MCF 10A (cell line): ENCODE measurements at regions of chr13 and their contacts with region 1.

Region 1: GRCh38 chr13:102870677-102871415 is 25.0 kb downstream of the ERCC5 start:
- DNase-seq: peak; percentile 54
- H3K4me3 Mint-ChIP-seq: no peak overlapping the region
- H3K27ac Mint-ChIP-seq: no peak overlapping the region
- H3K4me1 Mint-ChIP-seq: peaks cover 5% of the 10 kb centered on the region
- H3K27me3 Mint-ChIP-seq: no peaks in the 10 kb centered on the region
- CTCF ChIP-seq: peak; percentile 75

Region 2: DNA sequence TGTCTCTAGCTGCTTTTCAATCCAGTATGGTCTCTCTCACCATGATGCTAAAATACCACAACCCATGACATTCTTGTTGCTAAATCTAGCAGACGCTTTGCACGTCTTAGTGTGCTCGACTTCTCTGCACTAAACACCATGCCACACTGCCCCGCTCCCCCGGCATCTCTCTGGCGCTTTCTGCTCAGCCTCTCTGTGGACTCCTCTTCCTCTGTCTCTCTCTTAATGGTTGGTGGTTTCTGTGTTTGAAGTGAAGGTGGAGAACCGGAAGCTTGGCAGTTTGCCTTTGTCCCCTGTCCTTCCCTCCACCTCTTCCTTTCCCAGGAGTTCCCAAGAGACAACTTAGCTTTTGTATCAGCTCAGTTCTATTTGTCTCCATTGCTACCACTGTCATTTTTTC is 16.2 kb before region 1 on chr13:
- CTCF ChIA-PET with region 1: interaction called, 41 read pairs
- POLR2A ChIA-PET with region 1: no interaction called
- intact Hi-C with region 1: no loop called
- DNase-seq: no peak
- H3K4me3 Mint-ChIP-seq: no peak overlapping the region
- H3K27ac Mint-ChIP-seq: no peak overlapping the region
- H3K4me1 Mint-ChIP-seq: peaks cover 20% of the 10 kb centered on the region
- H3K27me3 Mint-ChIP-seq: no peaks in the 10 kb centered on the region
- CTCF ChIP-seq: no peak

Region 3: GRCh38 chr13:102900193-102900608 is 29.4 kb after region 1 on chr13:
- CTCF ChIA-PET with region 1: interaction called, 11 read pairs
- POLR2A ChIA-PET with region 1: interaction called, 3 read pairs
- intact Hi-C with region 1: no loop called
- DNase-seq: no peak
- H3K4me3 Mint-ChIP-seq: no peak overlapping the region
- H3K27ac Mint-ChIP-seq: no peak overlapping the region
- H3K4me1 Mint-ChIP-seq: peaks cover 14% of the 10 kb centered on the region
- H3K27me3 Mint-ChIP-seq: no peaks in the 10 kb centered on the region
- CTCF ChIP-seq: no peak

Region 4: DNA sequence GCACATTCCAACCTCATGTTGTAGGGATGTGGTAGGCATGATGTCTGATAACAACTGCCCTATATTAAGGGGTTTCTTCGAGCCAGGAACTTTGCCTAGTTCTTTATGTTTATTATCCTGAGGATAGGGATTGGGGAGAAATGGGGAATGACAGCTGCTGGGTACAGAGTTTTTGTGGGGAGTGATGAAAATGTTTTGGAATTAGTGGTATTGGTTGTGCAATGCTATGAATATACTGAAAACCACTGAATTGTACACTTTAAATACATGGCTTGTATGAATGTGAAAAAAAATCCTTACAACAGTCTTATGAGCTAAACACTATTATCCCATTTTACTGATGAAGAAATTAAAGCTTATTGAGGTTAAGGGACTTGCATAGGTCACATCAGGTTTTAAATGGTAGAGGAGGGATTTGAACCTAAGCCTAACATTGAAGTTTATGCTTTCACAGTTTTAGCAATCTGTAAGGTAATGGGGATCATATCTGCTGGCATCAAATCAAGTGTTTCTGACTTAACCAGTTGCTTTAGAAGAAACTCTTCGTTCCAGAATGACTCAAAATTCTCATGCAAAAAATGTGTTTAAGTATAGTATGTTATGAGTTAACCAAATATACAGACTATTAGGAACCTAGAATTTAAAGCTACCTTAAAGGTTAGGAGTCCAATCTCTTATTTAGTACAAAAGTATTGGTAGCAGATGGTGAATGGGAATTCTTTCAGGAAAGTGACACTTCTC is 36.3 kb after region 1 on chr13:
- CTCF ChIA-PET with region 1: interaction called, 13 read pairs
- POLR2A ChIA-PET with region 1: interaction called, 3 read pairs
- intact Hi-C with region 1: no loop called
- DNase-seq: no peak
- H3K4me3 Mint-ChIP-seq: no peak overlapping the region
- H3K27ac Mint-ChIP-seq: no peak overlapping the region
- H3K4me1 Mint-ChIP-seq: peaks cover 26% of the 10 kb centered on the region
- H3K27me3 Mint-ChIP-seq: no peaks in the 10 kb centered on the region
- CTCF ChIP-seq: no peak